HAP-1 (cell line): ENCODE measurements at regions of chr4 and their contacts with region 1.

Region 1: GRCh38 chr4:37780444-37781150 is 45.9 kb upstream of the PGM2 start:
- DNase-seq: no peak
- H3K4me3 ChIP-seq: no peak overlapping the region
- H3K4me1 ChIP-seq: no peaks in the 10 kb centered on the region
- H3K27me3 ChIP-seq: no peaks in the 10 kb centered on the region

Region 2: GRCh38 chr4:37603070-37603468 is 177.5 kb before region 1 on chr4:
- in situ Hi-C with region 1: loop called (anchors 10 kb)
- DNase-seq: peak; percentile 26 to 86
- H3K4me3 ChIP-seq: no peak overlapping the region
- H3K4me1 ChIP-seq: peaks cover 10% of the 10 kb centered on the region
- H3K27me3 ChIP-seq: no peaks in the 10 kb centered on the region

Region 3: DNA sequence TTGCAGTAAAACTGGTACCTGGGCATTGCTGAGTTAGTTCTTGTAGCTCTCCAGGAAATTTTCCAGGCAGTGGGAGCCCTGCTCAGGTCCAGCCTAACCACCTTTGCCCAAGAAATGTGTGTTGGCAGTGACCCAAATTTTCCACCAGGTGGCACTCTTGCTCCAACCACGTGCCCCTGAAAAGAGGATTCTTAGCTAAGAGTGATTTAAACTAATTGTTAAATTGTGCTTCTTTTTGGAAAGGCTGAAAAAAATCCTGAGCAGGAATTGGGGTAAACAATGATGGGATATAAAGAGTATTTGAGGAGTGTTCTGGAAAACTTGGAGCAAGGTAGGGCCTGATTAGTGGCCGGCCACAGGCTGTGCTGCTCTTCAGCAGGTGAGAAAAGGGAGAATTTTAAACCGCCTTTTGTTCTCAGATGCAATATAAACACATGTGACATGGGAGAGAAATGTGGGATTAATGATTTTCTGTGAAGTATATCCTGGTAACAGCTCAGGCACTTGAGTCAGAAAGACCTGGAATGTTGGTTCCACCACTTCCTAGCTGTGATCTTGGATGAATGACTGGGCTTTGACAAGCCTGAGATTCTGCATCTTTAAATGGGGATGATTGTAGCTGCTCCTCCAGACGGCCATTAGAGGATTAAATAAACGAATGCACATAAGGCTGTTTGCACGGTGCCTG is 399.2 kb after region 1 on chr4:
- in situ Hi-C with region 1: no loop called
- DNase-seq: peak; percentile 50 to 72
- H3K4me3 ChIP-seq: no peak overlapping the region
- H3K4me1 ChIP-seq: no peaks in the 10 kb centered on the region
- H3K27me3 ChIP-seq: peaks cover 4% of the 10 kb centered on the region; the same call in 1 of the 2 replicates